T-cell (primary cell): ENCODE measurements at regions of chr12 and their contacts with region 1.

Region 1: GRCh38 chr12:96516472-96517430 is 27.4 kb downstream of the CFAP54 start:
- DNase-seq: peak; percentile 65 to 93 (median 83)
- ATAC-seq: peak; percentile 77 to 92 (median 83)
- H3K4me3 ChIP-seq: no peak overlapping the region
- H3K4me3 Mint-ChIP-seq: peak overlapping the region in 2 of 3 donors; percentile 35 to 37
- H3K27ac ChIP-seq: peak overlapping the region; percentile 28
- H3K27ac Mint-ChIP-seq: peak overlapping the region; percentile 68 to 81
- H3K4me1 ChIP-seq: peaks cover 0 to 7% of the 10 kb centered on the region in 2 experiments
- H3K4me1 Mint-ChIP-seq: peaks cover 6 to 12% (median 10%) of the 10 kb centered on the region in 3 donors
- H3K27me3 ChIP-seq: no peaks in the 10 kb centered on the region
- H3K27me3 Mint-ChIP-seq: no peaks in the 10 kb centered on the region

Region 2: GRCh38 chr12:96061864-96062453 is 454.8 kb before region 1 on chr12:
- CTCF ChIA-PET with region 1: interaction called, 20 to 26 read pairs
- POLR2A ChIA-PET with region 1: no interaction called
- DNase-seq: peak; percentile 46 to 89 (median 71)
- ATAC-seq: peak; percentile 81 to 94 (median 85)
- H3K4me3 ChIP-seq: no peak overlapping the region
- H3K4me3 Mint-ChIP-seq: no peak overlapping the region
- H3K27ac ChIP-seq: no peak overlapping the region
- H3K27ac Mint-ChIP-seq: no peak overlapping the region
- H3K4me1 ChIP-seq: peaks cover 12 to 19% of the 10 kb centered on the region in 2 experiments
- H3K4me1 Mint-ChIP-seq: peaks cover 21 to 36% (median 27%) of the 10 kb centered on the region in 3 donors
- H3K27me3 ChIP-seq: no peaks in the 10 kb centered on the region
- H3K27me3 Mint-ChIP-seq: no peaks in the 10 kb centered on the region

Region 3: DNA sequence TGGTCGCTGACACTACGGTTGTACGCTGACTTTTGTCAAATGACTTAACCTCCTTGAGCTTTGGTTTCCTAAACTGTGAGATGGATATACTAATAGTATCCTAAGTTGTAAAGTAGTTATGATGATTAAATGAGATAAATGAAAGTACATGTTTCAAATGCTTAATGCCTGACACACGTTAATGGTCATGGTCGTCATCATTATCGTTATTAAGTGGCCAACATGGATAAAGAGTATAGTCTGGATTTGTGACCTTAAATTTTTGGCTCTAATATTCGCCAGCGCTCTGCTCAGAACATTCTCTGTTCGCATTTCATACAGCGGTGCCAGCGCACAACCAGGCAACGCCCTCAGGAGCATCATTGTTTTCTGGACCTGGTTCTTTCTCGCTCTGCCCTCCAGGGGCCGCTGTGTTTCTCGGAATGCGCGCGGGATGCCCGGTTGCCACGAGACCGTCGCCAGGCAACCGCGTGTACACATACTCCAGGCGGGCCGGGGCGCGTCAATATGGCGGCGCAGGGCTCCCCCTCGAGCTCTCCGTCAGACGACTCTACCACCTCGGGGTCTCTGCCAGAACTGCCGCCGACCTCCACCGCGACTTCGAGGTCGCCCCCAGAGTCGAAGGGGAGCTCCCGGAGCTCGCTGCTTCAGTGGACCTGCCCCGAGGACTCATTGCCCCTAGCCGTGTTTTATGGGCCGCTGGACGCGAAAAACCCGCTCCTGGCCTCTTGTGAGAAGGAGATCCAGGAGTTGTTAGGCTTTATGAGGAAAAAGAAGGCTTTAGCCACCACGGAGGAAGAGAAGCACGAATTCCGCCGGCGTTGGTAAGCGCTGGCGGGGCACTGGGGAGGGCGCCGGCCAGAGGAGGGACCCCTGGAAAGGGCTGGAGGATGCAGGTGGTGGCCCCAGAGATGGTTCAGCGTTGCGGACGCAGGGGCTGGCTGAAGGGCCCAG is 27.4 kb before region 1 on chr12 and contains the start of gene CFAP54:
- CTCF ChIA-PET with region 1: interaction called, 10 to 32 read pairs
- POLR2A ChIA-PET with region 1: interaction called in 1 of 2 experiments, 9 read pairs
- DNase-seq: peak; percentile 91 to 98 (median 95)
- ATAC-seq: peak; percentile 89 to 92 (median 92)
- H3K4me3 ChIP-seq: peak within 1 kb of the TSS; percentile 80 to 85
- H3K4me3 Mint-ChIP-seq: peak within 1 kb of the TSS; percentile 85 to 90 (median 85)
- H3K27ac ChIP-seq: peak within 1 kb of the TSS; percentile 43
- H3K27ac Mint-ChIP-seq: peak within 1 kb of the TSS; percentile 63 to 74
- H3K4me1 ChIP-seq: peaks cover 3 to 27% of the 10 kb centered on the region in 2 experiments
- H3K4me1 Mint-ChIP-seq: peaks cover 28 to 42% (median 31%) of the 10 kb centered on the region in 3 donors
- H3K27me3 ChIP-seq: peaks cover 0 to 6% of the 10 kb centered on the region in 2 experiments
- H3K27me3 Mint-ChIP-seq: no peaks in the 10 kb centered on the region
- total RNA-seq, gene CFAP54: 0.47 to 0.95 (median 0.90) TPM

Region 4: DNA sequence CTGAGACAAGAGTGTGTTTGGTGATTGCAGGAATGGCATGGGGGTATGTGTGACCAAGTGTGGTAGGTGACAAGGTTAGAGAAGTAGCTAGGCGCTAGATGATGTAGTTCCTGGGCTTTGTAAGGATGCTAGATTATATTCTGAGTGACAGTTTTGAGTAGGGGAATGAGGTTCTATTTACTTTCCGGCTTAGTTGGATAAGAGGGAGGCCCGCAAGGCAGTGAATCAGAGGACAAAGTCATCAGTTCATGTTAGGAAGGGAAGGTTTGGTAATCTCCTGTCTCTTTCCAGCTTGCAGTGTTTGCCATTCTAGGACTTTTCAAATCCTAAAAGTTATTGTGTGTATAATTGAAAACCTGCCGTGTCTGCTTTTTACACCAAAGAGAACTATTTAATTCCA is 17.6 kb after region 1 on chr12:
- CTCF ChIA-PET with region 1: no interaction called
- POLR2A ChIA-PET with region 1: no interaction called
- DNase-seq: no peak
- ATAC-seq: no peak
- H3K4me3 ChIP-seq: no peak overlapping the region
- H3K4me3 Mint-ChIP-seq: no peak overlapping the region
- H3K27ac ChIP-seq: no peak overlapping the region
- H3K27ac Mint-ChIP-seq: no peak overlapping the region
- H3K4me1 ChIP-seq: no peaks in the 10 kb centered on the region
- H3K4me1 Mint-ChIP-seq: no peaks in the 10 kb centered on the region
- H3K27me3 ChIP-seq: no peaks in the 10 kb centered on the region
- H3K27me3 Mint-ChIP-seq: no peaks in the 10 kb centered on the region

Region 5: GRCh38 chr12:96846293-96846692 is 329.5 kb after region 1 on chr12:
- CTCF ChIA-PET with region 1: no interaction called
- POLR2A ChIA-PET with region 1: no interaction called
- DNase-seq: no peak
- ATAC-seq: no peak
- H3K4me3 ChIP-seq: no peak overlapping the region
- H3K4me3 Mint-ChIP-seq: no peak overlapping the region
- H3K27ac ChIP-seq: no peak overlapping the region
- H3K27ac Mint-ChIP-seq: no peak overlapping the region
- H3K4me1 ChIP-seq: no peaks in the 10 kb centered on the region
- H3K4me1 Mint-ChIP-seq: no peaks in the 10 kb centered on the region
- H3K27me3 ChIP-seq: peaks cover 0 to 6% of the 10 kb centered on the region in 2 experiments
- H3K27me3 Mint-ChIP-seq: peaks cover 10 to 18% of the 10 kb centered on the region in 2 donors